Mammary epithelial cell (primary cell): ENCODE measurements at regions of chr7 and their contacts with region 1.

Region 1: GRCh38 chr7:92447345-92448204 is at the start of gene GATAD1:
- DNase-seq: peak; percentile 86
- H3K4me3 ChIP-seq: peak within 1 kb of the TSS; percentile 97 to 98 (median 97)
- H3K27ac ChIP-seq: peak within 1 kb of the TSS; percentile 85
- H3K4me1 ChIP-seq: peaks cover 4% of the 10 kb centered on the region
- H3K27me3 ChIP-seq: no peaks in the 10 kb centered on the region
- CTCF ChIP-seq: peak; percentile 83 to 93
- total RNA-seq, gene GATAD1: 26.2 to 30.2 TPM

Region 2: DNA sequence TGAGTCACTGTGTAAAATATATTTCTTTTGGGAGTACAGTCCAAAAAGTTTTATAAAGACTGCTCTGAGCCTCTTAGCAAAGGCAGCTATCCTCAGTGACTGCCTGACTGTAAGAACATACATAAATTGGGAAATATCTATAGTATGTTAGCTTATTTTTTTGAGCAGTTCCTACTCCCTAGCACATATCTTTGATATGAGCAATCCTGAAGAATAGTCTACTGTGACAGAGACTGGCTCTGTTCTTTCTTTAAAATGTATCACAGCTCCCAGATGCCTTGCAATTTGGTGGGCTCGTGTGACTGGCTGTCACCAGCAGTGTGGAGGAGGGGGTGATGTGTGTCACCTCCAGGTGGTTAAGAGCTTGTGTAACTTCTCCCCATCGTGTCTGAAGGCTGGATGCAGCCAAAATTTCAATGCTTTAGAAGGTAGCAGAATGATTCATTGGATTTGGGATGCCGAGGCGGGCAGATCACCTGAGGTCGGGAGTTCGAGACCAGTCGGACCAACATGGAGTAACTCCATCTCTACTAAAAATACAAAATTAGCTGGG is 615.0 kb before region 1 on chr7:
- CTCF ChIA-PET with region 1: no interaction called
- dilution Hi-C with region 1: no loop called
- in situ Hi-C with region 1: no loop called
- intact Hi-C with region 1: loop called (anchors 5 kb)
- DNase-seq: peak; percentile 22
- H3K4me3 ChIP-seq: no peak overlapping the region
- H3K27ac ChIP-seq: no peak overlapping the region
- H3K4me1 ChIP-seq: peaks cover 14% of the 10 kb centered on the region
- H3K27me3 ChIP-seq: no peaks in the 10 kb centered on the region
- CTCF ChIP-seq: no peak

Region 3: DNA sequence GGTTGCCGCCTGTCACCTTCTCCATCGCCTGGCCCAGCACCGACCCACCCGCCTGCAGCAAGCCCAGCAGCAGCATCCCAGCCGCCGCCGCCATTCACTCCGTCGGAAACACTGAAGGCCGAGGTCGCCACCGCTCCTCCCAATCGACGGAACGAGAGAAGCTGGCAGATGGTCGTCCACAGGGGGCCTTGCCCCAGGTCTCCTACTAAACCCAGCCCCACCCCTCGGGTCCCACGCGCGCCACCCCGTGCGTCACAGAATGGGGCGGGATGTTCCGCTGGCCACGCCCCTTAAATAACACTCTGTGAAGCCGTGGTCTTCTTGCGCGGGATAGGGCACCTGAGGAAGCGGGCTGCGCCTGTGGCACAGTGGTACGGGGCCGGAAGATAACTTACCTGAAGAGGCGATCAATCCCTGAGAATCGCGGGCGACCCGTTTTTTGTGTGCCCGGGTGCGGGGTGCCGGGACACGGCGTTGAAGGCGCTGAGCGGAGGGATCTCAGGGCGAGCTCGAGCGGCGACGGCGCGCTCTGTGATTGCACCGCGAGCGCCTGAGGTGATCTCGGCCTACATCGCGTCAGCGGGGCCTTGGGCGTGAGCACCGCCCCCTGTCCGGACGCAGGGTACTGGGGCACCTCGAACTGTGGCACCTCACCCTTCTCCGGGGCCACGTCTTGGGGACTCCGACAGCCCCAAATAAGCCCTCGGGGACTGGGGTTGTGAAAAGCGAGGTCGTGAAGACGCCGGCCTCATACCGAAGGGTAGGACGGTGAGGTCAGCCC is 313.1 kb before region 1 on chr7 and contains the start of gene CYP51A1:
- CTCF ChIA-PET with region 1: no interaction called
- dilution Hi-C with region 1: no loop called
- in situ Hi-C with region 1: no loop called
- intact Hi-C with region 1: loop called (anchors 2 kb)
- DNase-seq: peak; percentile 93
- H3K4me3 ChIP-seq: peak within 1 kb of the TSS; percentile 73 to 94 (median 81)
- H3K27ac ChIP-seq: peak within 1 kb of the TSS; percentile 95
- H3K4me1 ChIP-seq: peaks cover 22% of the 10 kb centered on the region
- H3K27me3 ChIP-seq: no peaks in the 10 kb centered on the region
- CTCF ChIP-seq: peak in 1 of 2 donors; percentile 11
- total RNA-seq, gene CYP51A1: 213 to 238 TPM

Region 4: DNA sequence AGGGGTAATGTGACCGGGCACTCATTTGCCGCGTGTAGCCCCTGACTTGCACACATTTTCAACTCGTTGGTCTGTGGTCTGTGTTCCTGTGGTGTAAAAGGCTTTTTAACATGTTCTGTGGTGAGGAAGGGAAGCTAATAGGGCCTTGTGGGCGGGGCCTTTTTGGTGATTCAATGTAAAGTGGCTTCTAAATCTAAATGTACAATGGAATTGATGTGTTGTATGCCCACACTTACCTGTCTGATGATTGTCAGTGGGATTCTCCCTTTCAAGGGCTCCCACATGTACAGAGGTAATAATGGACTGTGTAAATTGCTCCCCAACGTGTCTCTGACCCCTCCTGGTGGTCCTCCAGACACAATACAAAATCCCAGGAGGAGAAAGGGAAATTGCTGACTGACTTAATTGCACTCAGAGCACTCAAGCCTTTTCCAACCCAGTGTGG is 43.4 kb before region 1 on chr7:
- CTCF ChIA-PET with region 1: no interaction called
- dilution Hi-C with region 1: no loop called
- in situ Hi-C with region 1: no loop called
- intact Hi-C with region 1: loop called (anchors 2 kb)
- DNase-seq: no peak
- H3K4me3 ChIP-seq: no peak overlapping the region
- H3K27ac ChIP-seq: no peak overlapping the region
- H3K4me1 ChIP-seq: peaks cover 15% of the 10 kb centered on the region
- H3K27me3 ChIP-seq: no peaks in the 10 kb centered on the region
- CTCF ChIP-seq: no peak

Region 5: DNA sequence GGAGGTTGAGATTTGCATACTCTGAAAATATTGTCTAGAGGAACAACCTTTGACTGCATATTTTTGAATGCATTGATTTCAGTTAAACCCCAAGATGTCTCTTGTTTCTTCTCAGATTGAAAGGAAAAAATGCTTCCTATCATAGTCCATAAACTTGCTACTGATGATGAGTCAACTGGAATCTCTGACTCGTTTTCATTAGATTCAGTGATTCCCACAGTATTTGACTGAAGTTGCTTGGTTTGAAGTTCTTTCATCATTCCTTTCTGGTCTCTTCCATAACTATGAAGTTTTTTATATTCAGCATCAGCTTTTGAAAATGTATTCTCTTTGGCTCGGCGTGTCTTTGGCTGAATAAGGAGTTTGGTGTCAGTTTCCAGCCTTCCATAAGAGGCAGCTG is 70.1 kb after region 1 on chr7:
- CTCF ChIA-PET with region 1: no interaction called
- dilution Hi-C with region 1: loop called (anchors 5 kb)
- in situ Hi-C with region 1: no loop called
- intact Hi-C with region 1: no loop called
- DNase-seq: peak; percentile 35
- H3K4me3 ChIP-seq: no peak overlapping the region
- H3K27ac ChIP-seq: no peak overlapping the region
- H3K4me1 ChIP-seq: no peaks in the 10 kb centered on the region
- H3K27me3 ChIP-seq: no peaks in the 10 kb centered on the region
- CTCF ChIP-seq: no peak